ENCODE measurements at regions of chr20 and their contacts with region 1.

Region 1: GRCh38 chr20:18287915-18288748 is at the start of gene ZNF133:
- DNase-seq: peak; percentile 96
- H3K4me3 ChIP-seq: peak within 1 kb of the TSS; percentile 93
- H3K27ac ChIP-seq: peak within 1 kb of the TSS; percentile 87
- H3K4me1 ChIP-seq: peaks cover 6% of the 10 kb centered on the region; the same call in 1 of the 2 replicates
- H3K27me3 ChIP-seq: no peaks in the 10 kb centered on the region
- total RNA-seq, gene ZNF133: 17.9 and 18.0 TPM in 2 replicates

Region 2: GRCh38 chr20:17504898-17505635 is 783.1 kb before region 1 on chr20:
- in situ Hi-C with region 1: loop called (anchors 25 kb)
- DNase-seq: peak; percentile 80
- H3K4me3 ChIP-seq: peak overlapping the region; percentile 83
- H3K27ac ChIP-seq: peak overlapping the region; percentile 34; the same call in 1 of the 2 replicates
- H3K4me1 ChIP-seq: peaks cover 12% of the 10 kb centered on the region; the same call in 1 of the 2 replicates
- H3K27me3 ChIP-seq: no peaks in the 10 kb centered on the region

Region 3: DNA sequence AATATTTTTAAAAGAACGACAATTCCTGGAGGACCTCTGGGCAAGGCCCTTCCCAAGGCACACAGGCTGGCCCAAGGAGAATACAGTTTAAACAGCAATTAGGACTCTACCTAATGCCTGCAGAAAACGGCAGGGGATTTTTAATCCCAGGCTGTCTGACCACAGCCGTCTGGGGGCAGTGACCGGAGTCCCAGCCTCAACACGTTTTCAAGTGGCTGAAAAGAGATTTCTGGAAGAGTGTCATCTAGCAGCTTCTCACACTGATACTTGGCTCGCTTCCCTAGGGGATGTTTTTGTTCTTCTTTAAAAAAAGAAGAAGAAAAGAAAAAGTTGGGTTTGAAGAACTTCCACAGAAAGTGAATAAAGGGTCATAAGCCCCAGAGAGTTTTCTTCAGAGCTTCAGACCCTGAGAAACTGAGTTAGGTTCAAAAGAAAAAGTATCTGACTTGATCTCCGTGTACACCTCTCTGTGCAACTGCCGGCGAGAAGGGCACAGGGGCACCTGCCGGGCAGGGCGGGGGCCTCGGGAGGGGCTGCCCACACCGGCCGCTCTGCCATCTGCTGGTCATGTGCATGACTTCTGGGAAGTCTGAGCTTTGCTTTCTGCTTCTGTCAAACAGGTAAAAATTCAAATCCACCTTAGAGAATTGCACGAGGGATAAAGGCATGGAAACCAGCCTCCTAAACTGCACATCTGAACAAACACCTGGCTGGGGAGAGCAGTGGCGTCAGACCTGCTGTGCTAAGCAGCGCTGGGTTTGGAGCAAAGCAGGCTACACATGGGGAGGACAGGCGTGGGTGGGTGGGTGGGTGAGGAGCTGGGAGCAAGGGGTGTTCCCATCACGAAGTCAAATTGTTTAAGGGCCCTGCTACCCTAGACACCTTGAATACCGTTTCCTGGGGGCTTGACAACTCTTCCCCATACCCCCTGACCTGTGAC is 639.1 kb before region 1 on chr20:
- in situ Hi-C with region 1: loop called (anchors 25 kb)
- DNase-seq: no peak
- H3K4me3 ChIP-seq: no peak overlapping the region
- H3K27ac ChIP-seq: 0 out of 2 replicates have a peak overlapping the region, but pooled peaks have one; percentile 2
- H3K4me1 ChIP-seq: peaks cover 29% of the 10 kb centered on the region
- H3K27me3 ChIP-seq: no peaks in the 10 kb centered on the region

Region 4: GRCh38 chr20:18739751-18740166 is 451.6 kb after region 1 on chr20:
- in situ Hi-C with region 1: no loop called
- DNase-seq: peak; percentile 53
- H3K4me3 ChIP-seq: 0 out of 2 replicates have a peak overlapping the region, but pooled peaks have one; percentile 6
- H3K27ac ChIP-seq: peak overlapping the region; percentile 33
- H3K4me1 ChIP-seq: no peaks in the 10 kb centered on the region; the same call in 1 of the 2 replicates
- H3K27me3 ChIP-seq: no peaks in the 10 kb centered on the region